A549 (cell line): ENCODE measurements at regions of chr2 and their contacts with region 1.

Region 1: DNA sequence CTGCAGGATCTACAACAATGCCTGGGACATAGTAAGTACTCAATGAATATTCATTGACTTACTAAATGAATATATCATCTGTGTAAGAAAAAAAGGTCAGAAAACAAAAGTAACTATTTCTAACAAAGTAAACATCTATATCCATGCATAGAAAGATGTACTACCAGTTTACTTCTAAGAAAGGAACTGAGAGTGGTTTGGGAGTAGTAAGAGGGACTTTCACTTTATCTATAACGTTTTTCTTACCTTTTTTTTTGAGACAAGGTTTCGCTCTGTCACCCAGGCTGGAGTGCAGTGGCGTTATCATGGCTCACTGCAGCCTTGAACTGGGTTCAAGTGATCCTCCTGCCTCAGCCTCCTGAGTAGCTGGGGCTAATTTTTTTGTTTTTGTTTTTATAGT is 25.7 kb downstream of the DHX57 start:
- DNase-seq: no peak
- ATAC-seq: no peak
- H3K4me3 ChIP-seq: no peak overlapping the region
- H3K27ac ChIP-seq: no peak overlapping the region
- H3K4me1 ChIP-seq: no peaks in the 10 kb centered on the region
- CTCF ChIP-seq: no peak
- EP300 ChIP-seq: no peak
- POLR2A ChIP-seq: no peak
- RAD21 ChIP-seq: no peak

Region 2: GRCh38 chr2:38835015-38835601 is 14.9 kb before region 1 on chr2:
- CTCF ChIA-PET with region 1: interaction called, 22 read pairs
- POLR2A ChIA-PET with region 1: no interaction called
- DNase-seq: peak in 1 of 2 experiments; percentile 55
- ATAC-seq: peak in 1 of 2 experiments; percentile 77; a peak in 3 of 6 replicates
- H3K4me3 ChIP-seq: no peak overlapping the region
- H3K27ac ChIP-seq: no peak overlapping the region
- H3K4me1 ChIP-seq: no peaks in the 10 kb centered on the region
- CTCF ChIP-seq: peak; percentile 68
- EP300 ChIP-seq: no peak
- POLR2A ChIP-seq: no peak
- RAD21 ChIP-seq: peak; percentile 53 to 61

Region 3: GRCh38 chr2:38875576-38876367 is 25.7 kb after region 1 on chr2 and contains the starts of genes DHX57 and MORN2:
- CTCF ChIA-PET with region 1: no interaction called
- POLR2A ChIA-PET with region 1: no interaction called
- DNase-seq: peak; percentile 88 to 98
- ATAC-seq: peak; percentile 99 to 100
- H3K4me3 ChIP-seq: peak within 1 kb of the TSS; percentile 74
- H3K27ac ChIP-seq: peak within 1 kb of the TSS; percentile 80 to 90
- H3K4me1 ChIP-seq: peaks cover 9% of the 10 kb centered on the region
- CTCF ChIP-seq: no peak
- EP300 ChIP-seq: no peak
- POLR2A ChIP-seq: peak; percentile 79
- RAD21 ChIP-seq: no peak; a peak in 1 of 5 replicates
- polyA plus RNA-seq, gene DHX57: 31.8 and 36.8 TPM in 2 replicates
- polyA plus RNA-seq, gene MORN2: 32.5 and 54.7 TPM in 2 replicates

Region 4: DNA sequence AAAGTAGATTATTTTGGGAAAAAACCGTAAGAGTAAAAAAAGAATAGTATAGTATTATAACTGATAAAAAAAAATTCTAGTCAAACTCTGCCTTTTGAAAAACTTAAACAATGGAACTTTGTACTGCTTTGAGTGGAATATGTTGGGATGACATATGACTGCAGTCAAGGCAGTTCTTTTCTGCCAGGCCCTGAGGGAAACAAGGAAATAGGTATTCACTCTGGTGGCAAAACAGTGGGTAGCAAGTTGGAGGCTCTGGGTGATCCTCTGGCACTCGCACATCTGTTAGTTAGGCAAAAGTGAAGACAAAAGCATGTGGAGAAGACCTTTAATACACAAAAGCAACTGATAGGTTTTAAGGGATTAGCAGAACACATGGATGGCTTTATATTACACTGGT is 141.9 kb after region 1 on chr2:
- CTCF ChIA-PET with region 1: no interaction called
- POLR2A ChIA-PET with region 1: no interaction called
- DNase-seq: no peak
- ATAC-seq: no peak; a peak in 1 of 6 replicates
- H3K4me3 ChIP-seq: no peak overlapping the region
- H3K27ac ChIP-seq: no peak overlapping the region
- H3K4me1 ChIP-seq: peaks cover 3% of the 10 kb centered on the region; the same call in 2 of the 3 replicates
- CTCF ChIP-seq: no peak
- EP300 ChIP-seq: no peak
- POLR2A ChIP-seq: no peak
- RAD21 ChIP-seq: no peak